Tibial artery (tissue), 4 donors: ENCODE measurements at regions of chr4 and their contacts with region 1.

Region 1: GRCh38 chr4:3408793-3409330 is 32.9 kb upstream of the HGFAC start:
- DNase-seq: peak in 1 of 2 donors; percentile 43
- H3K4me3 ChIP-seq: no peak overlapping the region
- H3K27ac ChIP-seq: no peak overlapping the region
- H3K4me1 ChIP-seq: peaks cover 0 to 27% (median 12%) of the 10 kb centered on the region in 4 donors
- H3K27me3 ChIP-seq: no peaks in the 10 kb centered on the region
- CTCF ChIP-seq: no peak

Region 2: DNA sequence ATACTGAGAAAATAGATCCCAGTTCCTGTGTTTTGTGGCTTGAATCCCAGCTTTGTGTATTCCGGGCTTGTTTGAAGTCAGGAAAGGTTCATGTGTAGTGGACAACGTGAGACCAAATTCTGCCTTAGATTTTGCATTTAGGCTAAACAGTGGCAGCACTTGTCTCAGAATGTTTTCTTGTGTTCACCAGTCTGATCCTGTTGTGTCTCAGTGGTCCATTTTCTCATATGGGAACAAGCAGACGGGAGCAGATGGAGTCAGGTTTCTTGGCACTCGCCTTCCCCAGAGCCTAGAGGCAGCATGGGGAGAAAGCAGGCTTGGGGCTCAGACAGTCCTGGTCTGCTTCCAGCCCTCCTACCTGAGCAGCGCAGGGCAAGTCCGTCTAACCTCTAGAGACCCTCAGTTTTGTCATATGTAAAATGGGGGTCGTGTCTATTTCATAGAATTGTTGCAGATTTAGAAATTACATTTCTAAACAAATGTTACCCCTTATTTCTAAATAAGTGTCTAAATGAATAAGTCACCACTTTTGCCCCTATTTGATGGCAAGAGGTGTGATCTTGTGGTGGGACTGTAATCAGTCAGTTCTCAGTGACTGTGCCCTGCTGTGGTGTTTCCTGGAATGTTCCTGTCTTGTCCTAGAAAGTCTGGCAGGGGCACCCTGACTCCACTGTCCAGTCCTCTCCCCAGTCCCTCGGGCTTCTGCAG is 188.2 kb before region 1 on chr4:
- intact Hi-C with region 1: no loop called
- DNase-seq: no peak
- H3K4me3 ChIP-seq: no peak overlapping the region
- H3K27ac ChIP-seq: no peak overlapping the region
- H3K4me1 ChIP-seq: no peaks in the 10 kb centered on the region
- H3K27me3 ChIP-seq: no peaks in the 10 kb centered on the region
- CTCF ChIP-seq: no peak

Region 3: DNA sequence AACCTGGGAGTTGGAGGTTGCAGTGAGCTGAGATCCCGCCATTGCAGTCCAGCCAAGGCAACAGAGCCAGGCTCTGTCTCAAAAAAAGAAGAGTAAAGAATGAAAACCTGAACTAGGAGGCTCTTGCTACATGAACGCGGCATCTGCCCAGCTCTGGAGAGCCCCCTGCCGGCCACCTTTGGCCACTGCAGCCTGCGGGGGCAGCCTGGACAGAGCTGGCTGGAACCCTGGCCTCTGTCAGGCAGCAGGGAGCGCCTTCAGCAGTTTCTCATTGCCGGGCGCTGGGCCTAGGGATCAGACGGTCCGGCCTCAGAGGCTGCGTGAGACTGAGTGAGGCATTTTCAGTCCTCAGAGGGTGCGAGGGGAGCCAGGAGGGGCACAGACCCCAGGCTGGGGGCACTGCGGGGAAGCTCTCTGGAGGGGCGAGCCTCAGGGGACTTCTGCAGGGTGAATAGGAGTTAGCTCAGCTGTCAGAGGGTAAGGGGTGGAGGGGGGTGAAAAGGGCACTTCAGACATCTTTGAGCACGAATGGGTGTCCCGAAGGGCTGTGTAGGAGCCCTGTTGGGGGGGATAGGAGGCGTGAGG is 71.8 kb after region 1 on chr4:
- intact Hi-C with region 1: loop called (anchors 5 kb)
- DNase-seq: peak; percentile 56 to 89
- H3K4me3 ChIP-seq: no peak overlapping the region
- H3K27ac ChIP-seq: peak overlapping the region in 1 of 2 donors; percentile 87
- H3K4me1 ChIP-seq: peaks cover 0 to 47% (median 27%) of the 10 kb centered on the region in 4 donors
- H3K27me3 ChIP-seq: no peaks in the 10 kb centered on the region
- CTCF ChIP-seq: peak; percentile 93 to 99